ENCODE measurements at regions of chr5 and their contacts with region 1.

Region 1: DNA sequence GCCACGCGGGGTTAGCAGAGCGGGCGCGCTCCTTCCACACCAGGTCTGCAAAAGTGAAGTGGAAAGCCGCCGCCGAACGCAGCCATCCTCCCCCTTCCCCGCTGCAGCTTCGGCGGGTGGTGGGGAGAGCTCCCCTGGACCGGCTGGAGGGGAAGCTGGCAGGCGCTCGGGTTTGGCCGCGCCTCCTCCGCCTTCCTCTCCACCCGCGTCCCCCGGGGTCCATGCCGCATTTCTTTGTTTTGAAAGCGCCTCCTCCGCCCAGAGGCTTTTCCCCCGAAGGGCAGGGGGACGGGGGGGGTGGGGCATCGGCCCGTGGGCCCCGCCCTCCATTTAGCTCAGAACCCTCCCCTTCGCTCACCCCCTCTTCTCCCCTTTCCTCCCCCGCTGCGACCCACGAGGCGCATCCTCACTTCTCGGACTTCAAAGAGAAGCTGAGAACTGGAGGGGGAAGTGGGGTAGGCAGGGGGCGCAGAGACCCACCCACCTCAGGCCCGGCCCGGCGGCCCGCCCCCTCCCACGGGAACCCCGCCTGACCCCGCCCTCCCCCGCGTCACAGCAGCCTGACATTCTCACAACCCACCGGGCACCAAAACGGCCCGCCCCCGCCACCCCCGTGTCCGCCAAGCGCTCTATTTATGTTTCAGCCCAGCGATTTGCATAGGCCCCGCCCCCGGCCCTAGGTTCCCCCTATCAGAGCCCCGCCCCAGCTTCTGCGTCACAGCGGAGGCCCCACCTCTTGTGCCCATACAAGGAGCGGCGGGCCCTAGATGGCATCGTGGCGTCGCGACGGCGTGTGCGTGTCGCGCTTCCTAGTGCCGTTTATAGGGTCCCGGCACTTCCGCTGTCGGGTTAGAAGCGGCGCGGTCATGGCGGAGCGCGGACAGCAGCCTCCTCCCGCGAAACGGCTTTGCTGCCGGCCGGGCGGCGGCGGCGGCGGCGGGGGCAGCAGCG is at the start of gene ZSWIM6:
- DNase-seq: peak; percentile 97
- H3K4me3 ChIP-seq: peak within 1 kb of the TSS; percentile 92
- CTCF ChIP-seq: no peak

Region 2: GRCh38 chr5:61055434-61056006 is 276.2 kb before region 1 on chr5:
- CTCF ChIA-PET with region 1: interaction called, 25 read pairs
- POLR2A ChIA-PET with region 1: no interaction called
- DNase-seq: no peak
- H3K4me3 ChIP-seq: no peak overlapping the region
- CTCF ChIP-seq: peak; percentile 60

Region 3: GRCh38 chr5:61306511-61307131 is 25.1 kb before region 1 on chr5:
- CTCF ChIA-PET with region 1: interaction called, 13 read pairs
- POLR2A ChIA-PET with region 1: interaction called, 15 read pairs
- DNase-seq: no peak
- H3K4me3 ChIP-seq: peak overlapping the region; percentile 32
- CTCF ChIP-seq: no peak

Region 4: DNA sequence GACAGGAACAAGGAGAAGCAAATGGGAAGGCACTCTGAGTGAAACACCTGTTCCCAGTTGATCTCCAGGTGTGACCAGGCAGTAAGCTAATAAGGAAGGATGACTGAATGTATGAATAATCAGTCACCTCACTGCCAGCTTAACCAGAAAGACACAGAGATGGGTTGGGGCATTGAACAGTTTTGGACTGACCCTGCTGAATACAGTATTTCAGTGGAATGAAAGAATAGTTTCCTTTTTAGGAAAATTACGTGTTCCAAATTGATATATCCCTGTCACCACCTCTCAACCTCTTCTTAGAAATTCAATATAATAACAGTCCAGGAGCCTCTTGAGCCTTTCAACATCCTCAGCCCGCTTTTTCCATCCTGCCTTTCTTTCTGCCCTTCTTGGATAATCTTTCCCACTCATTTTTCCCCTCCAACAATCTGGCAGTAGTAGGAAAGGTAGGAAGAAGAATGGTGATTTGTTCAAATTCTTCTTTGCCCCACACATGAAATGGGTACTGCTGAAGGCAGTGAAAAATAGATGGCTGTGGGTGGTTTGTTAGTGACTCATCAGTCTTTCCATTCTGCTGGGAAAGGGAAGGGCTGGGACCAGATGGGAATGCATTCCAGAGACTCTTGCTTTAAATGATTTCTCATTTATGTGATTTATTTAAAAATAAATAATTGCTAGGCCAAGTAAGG is 118.3 kb after region 1 on chr5:
- CTCF ChIA-PET with region 1: no interaction called
- POLR2A ChIA-PET with region 1: interaction called, 10 read pairs
- DNase-seq: peak; percentile 81
- H3K4me3 ChIP-seq: no peak overlapping the region; the same call in 1 of the 2 replicates
- CTCF ChIP-seq: no peak